WTC11 (cell line): ENCODE measurements at regions of chr3 and their contacts with region 1.

Region 1: DNA sequence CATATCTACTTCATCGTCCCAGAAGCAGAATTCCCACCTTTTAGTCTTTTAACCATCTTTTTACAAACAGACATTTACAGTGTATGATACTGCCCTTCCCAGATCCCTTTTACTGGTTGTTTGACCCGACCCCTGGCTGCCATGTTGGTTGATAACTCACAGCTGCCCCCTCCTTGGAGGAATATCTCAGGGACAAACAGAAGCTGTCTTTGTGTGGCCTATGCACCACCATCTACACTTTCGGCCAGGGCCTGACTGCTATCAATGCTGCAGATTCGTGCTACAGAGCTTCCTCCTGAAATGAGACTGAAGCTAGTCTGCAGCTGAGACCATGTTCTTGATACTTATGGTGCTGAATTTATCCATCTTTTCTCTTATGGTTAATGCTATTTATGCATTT is 6.6 kb upstream of the POLQ start:
- DNase-seq: no peak
- ATAC-seq: peak; percentile 24; the same call in 1 of the 2 replicates
- H3K4me3 Mint-ChIP-seq: no peak overlapping the region
- H3K27ac Mint-ChIP-seq: peak overlapping the region; percentile 78; the same call in 1 of the 2 replicates
- H3K4me1 Mint-ChIP-seq: peaks cover 21% of the 10 kb centered on the region
- H3K27me3 Mint-ChIP-seq: no peaks in the 10 kb centered on the region
- CTCF ChIP-seq: no peak

Region 2: GRCh38 chr3:121566773-121567172 is 14.4 kb after region 1 on chr3:
- CTCF ChIA-PET with region 1: interaction called, 11 read pairs
- POLR2A ChIA-PET with region 1: no interaction called
- DNase-seq: no peak
- ATAC-seq: no peak
- H3K4me3 Mint-ChIP-seq: no peak overlapping the region
- H3K27ac Mint-ChIP-seq: no peak overlapping the region
- H3K4me1 Mint-ChIP-seq: peaks cover 22% of the 10 kb centered on the region
- H3K27me3 Mint-ChIP-seq: no peaks in the 10 kb centered on the region
- CTCF ChIP-seq: no peak